ENCODE measurements at regions of chr3 and their contacts with region 1.

Region 1: GRCh38 chr3:122258757-122259371 is 66.2 kb upstream of the CSTA start:
- DNase-seq: peak; percentile 58
- H3K4me3 ChIP-seq: no peak overlapping the region
- H3K27ac ChIP-seq: no peak overlapping the region
- H3K4me1 ChIP-seq: peaks cover 6% of the 10 kb centered on the region
- H3K27me3 ChIP-seq: no peaks in the 10 kb centered on the region
- CTCF ChIP-seq: peak; percentile 63 to 85

Region 2: DNA sequence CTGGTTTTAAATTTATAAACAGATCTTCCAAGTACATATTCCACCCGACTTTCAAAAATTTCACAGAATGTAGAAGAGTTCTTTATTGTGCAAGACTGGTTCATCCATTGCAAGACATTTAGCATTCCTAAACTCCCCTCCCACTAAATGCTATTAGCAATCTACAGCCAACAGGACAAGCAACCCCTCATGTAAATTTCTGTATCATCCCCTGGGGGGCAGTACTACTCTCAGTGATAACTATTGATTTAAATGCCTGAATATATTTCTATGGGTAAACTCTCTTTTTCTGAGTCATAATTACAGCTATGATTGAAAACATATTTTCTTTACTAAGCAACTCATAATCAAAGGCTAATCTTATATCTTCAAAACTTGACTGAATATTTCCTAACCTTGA is 375.4 kb before region 1 on chr3:
- CTCF ChIA-PET with region 1: no interaction called
- dilution Hi-C with region 1: no loop called
- in situ Hi-C with region 1: no loop called
- intact Hi-C with region 1: loop called (anchors 2 kb)
- DNase-seq: peak; percentile 46
- H3K4me3 ChIP-seq: no peak overlapping the region
- H3K27ac ChIP-seq: no peak overlapping the region
- H3K4me1 ChIP-seq: peaks cover 10% of the 10 kb centered on the region
- H3K27me3 ChIP-seq: no peaks in the 10 kb centered on the region
- CTCF ChIP-seq: peak; percentile 45 to 56

Region 3: DNA sequence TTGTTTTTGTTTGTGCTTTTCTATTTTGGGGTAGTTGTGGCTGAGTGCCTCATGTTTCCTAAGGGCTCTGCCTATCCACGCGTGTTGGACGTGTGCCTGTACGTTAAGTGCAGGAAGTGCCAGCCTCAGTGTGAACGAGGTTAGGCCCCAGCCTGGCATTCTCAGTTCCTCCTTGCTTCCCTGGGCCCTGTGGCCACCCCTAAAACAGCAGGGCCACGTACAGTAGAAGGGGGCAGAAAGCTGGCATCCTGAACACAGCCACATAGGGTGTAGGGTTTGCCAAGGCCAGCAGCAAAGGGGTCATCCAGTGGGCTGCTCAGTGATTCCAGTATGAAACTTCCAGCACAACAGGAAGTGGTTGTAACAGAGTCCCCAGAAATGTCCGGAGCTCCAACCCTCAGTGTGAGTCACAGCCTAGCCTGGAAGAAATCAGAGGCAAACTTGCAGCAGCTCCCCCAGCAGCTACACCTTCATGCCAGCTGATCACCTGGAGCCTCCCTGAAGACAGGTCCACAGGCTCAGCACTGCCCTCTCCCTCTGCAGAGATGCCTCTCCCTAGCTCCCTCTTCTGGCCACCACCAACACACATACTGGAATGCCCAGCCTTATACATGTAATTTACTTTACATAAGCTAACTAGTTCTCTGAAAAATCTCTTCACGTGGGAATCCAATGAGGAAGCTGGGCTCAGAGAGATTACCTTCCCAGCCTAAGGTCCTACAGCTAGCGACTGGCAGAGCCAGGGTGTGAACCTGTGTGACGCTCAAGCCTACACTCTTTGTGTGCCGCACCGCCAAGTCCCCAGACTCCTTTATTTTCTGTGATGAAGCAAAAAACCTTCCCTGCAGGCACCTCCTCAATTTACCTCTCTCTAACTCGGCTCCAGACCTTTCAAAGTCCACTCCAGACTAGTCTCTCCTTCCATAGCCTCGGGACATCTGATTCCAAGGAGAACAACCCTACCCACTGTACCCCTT is 263.4 kb before region 1 on chr3:
- CTCF ChIA-PET with region 1: no interaction called
- dilution Hi-C with region 1: no loop called
- in situ Hi-C with region 1: no loop called
- intact Hi-C with region 1: loop called (anchors 5 kb)
- DNase-seq: peak; percentile 93
- H3K4me3 ChIP-seq: no peak overlapping the region
- H3K27ac ChIP-seq: peak overlapping the region; percentile 55
- H3K4me1 ChIP-seq: peaks cover 27% of the 10 kb centered on the region
- H3K27me3 ChIP-seq: no peaks in the 10 kb centered on the region
- CTCF ChIP-seq: peak; percentile 69 to 73

Region 4: GRCh38 chr3:122299872-122300460 is 41.1 kb after region 1 on chr3:
- CTCF ChIA-PET with region 1: no interaction called
- dilution Hi-C with region 1: no loop called
- in situ Hi-C with region 1: no loop called
- intact Hi-C with region 1: loop called (anchors 2 kb)
- DNase-seq: no peak
- H3K4me3 ChIP-seq: no peak overlapping the region
- H3K27ac ChIP-seq: no peak overlapping the region
- H3K4me1 ChIP-seq: no peaks in the 10 kb centered on the region
- H3K27me3 ChIP-seq: no peaks in the 10 kb centered on the region
- CTCF ChIP-seq: peak; percentile 67 to 70

Region 5: GRCh38 chr3:122797309-122797708 is 538.4 kb after region 1 on chr3:
- CTCF ChIA-PET with region 1: no interaction called
- dilution Hi-C with region 1: no loop called
- in situ Hi-C with region 1: no loop called
- intact Hi-C with region 1: no loop called
- DNase-seq: no peak
- H3K4me3 ChIP-seq: no peak overlapping the region
- H3K27ac ChIP-seq: no peak overlapping the region
- H3K4me1 ChIP-seq: peaks cover 48% of the 10 kb centered on the region
- H3K27me3 ChIP-seq: no peaks in the 10 kb centered on the region
- CTCF ChIP-seq: no peak

Measured in mammary epithelial cell (primary cell).